ENCODE measurements at regions of chr7 and their contacts with region 1.

Region 1: DNA sequence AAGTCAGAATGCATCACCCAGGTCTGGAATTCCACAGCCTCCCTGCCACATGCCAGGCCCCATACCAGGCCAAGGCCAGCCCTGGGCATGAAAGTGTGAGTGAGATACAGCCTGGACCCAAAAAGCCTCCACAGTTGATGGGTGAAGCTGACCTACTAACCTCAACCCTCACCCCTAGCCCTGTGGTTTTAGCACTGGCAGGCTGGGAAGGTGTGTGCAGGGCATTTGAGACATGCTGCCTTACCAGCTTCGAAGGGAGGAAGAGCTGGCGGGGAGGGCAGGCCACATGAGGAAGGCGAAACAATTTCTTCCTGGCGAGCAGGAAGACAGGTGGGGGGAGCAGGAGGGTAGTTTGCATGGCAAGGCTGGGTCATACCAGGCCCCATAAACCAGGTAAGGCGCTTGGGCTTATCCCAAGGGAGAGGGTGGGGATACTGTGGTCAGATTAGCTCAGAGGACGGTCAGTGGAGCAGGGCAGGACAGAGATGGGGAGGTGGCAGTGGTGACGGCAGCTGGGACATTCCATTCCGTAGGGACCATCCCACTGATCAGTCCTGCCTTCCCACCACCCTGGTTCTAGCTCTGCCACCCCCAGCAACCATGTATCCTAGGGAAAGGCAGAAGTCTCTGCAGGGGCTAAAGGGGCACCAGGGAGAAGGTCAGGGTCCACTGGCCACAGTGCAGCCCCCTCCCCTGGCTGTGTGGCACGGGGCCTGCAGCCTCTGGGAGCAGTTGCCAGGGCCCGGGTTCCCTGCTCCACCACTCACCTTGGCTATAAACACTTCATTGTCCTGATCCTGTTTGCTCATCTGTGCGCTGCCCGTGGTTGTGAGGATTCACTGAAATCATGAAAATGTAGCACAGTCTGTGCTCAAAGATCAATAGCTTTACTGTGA is 155.8 kb downstream of the NRF1 start:
- DNase-seq: no peak
- ATAC-seq: no peak
- H3K4me3 ChIP-seq: no peak overlapping the region
- H3K27ac ChIP-seq: no peak overlapping the region
- H3K4me1 ChIP-seq: peaks cover 4% of the 10 kb centered on the region; the same call in 1 of the 2 replicates
- H3K27me3 ChIP-seq: no peaks in the 10 kb centered on the region
- CTCF ChIP-seq: no peak

Region 2: DNA sequence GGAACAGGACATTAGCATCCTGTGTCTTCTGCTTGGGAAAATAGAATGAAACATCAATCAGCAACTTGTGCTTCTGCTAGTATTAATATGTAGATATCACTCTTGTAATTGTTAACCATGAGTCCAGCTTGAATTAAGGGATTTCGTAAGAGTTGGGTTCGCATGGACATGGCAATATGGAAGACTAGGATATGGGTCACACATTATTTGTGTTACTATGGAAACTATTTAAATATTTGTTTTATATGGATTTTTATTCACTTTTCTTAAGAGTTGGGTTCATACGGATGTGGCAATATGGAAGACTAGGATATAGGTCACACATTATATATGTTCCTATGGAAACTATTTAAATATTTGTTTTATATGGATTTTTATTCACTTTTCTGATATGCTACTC is 736.9 kb before region 1 on chr7:
- CTCF ChIA-PET with region 1: no interaction called
- POLR2A ChIA-PET with region 1: no interaction called
- intact Hi-C with region 1: no loop called
- DNase-seq: no peak
- ATAC-seq: no peak
- H3K4me3 ChIP-seq: no peak overlapping the region
- H3K27ac ChIP-seq: no peak overlapping the region
- H3K4me1 ChIP-seq: no peaks in the 10 kb centered on the region
- H3K27me3 ChIP-seq: no peaks in the 10 kb centered on the region
- CTCF ChIP-seq: no peak

Region 3: GRCh38 chr7:129635300-129636029 is 131.9 kb before region 1 on chr7:
- CTCF ChIA-PET with region 1: no interaction called
- POLR2A ChIA-PET with region 1: no interaction called
- intact Hi-C with region 1: no loop called
- DNase-seq: peak; percentile 76
- ATAC-seq: peak; percentile 100
- H3K4me3 ChIP-seq: no peak overlapping the region
- H3K27ac ChIP-seq: no peak overlapping the region
- H3K4me1 ChIP-seq: peaks cover 5% of the 10 kb centered on the region; the same call in 1 of the 2 replicates
- H3K27me3 ChIP-seq: no peaks in the 10 kb centered on the region
- CTCF ChIP-seq: peak; percentile 88

Region 4: DNA sequence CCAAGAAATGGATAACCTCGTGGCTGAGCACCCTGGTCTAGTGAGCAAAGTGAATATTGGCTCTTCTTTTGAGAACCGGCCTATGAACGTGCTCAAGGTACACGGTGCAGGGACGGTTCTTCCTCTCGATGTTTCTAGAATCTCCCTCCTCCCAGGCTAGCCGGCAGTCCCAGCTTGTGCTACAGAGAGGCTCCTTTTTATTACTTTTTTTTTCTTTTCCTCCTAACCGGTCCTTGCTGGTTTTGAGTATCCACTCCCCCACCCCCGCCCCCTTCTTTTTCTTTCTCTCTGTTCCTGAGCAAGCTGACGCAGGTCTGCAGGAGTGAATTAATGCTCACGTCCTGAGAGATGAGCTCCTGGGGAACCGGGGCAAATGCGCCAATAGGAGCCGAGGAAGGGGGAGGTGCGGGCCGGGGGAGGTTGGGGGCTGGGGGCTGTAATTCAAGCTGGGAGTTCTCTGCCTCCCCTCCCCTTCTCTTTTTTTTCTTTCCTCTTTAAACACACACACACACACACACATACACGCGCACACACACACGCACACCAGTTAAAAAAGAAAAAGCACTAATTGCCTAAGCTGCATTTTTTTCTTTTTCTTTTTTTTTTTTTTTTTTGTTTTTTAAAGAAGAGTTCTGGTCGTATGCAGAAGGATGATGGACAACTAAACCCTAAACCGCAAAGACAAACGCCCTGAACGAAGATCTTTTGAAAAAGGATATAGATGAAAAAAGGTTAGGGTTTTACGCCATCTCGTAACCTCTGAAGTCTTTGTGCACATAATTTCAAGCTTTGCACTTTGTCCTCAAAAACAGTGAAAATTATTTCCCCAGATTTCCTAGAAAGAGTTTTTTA is 505.9 kb after region 1 on chr7:
- CTCF ChIA-PET with region 1: interaction called, 17 read pairs
- POLR2A ChIA-PET with region 1: no interaction called
- intact Hi-C with region 1: no loop called
- DNase-seq: no peak
- ATAC-seq: no peak
- H3K4me3 ChIP-seq: no peak overlapping the region
- H3K27ac ChIP-seq: no peak overlapping the region
- H3K4me1 ChIP-seq: 0 out of 2 replicates have a peak, but pooled peaks cover 9% of the 10 kb centered on the region
- H3K27me3 ChIP-seq: no peaks in the 10 kb centered on the region
- CTCF ChIP-seq: no peak

Measured in PC-3 (cell line).